ENCODE measurements at regions of chrX and their contacts with region 1.

Region 1: GRCh38 chrX:75883446-75883845 is 98.4 kb upstream of the MAGEE2 start:
- DNase-seq: no peak
- H3K4me3 ChIP-seq: no peak overlapping the region
- H3K27ac ChIP-seq: no peak overlapping the region
- H3K4me1 ChIP-seq: no peaks in the 10 kb centered on the region
- H3K27me3 ChIP-seq: no peaks in the 10 kb centered on the region
- CTCF ChIP-seq: no peak
- POLR2A ChIP-seq: no peak

Region 2: GRCh38 chrX:75522565-75523431 is 360.6 kb before region 1 on chrX and contains the start of gene ZDHHC15:
- CTCF ChIA-PET with region 1: no interaction called
- POLR2A ChIA-PET with region 1: no interaction called
- dilution Hi-C with region 1: no loop called
- intact Hi-C with region 1: loop called (anchors 10 kb)
- DNase-seq: peak; percentile 0
- H3K4me3 ChIP-seq: no peak within 1 kb of the TSS
- H3K27ac ChIP-seq: no peak within 1 kb of the TSS
- H3K4me1 ChIP-seq: no peaks in the 10 kb centered on the region
- H3K27me3 ChIP-seq: no peaks in the 10 kb centered on the region
- CTCF ChIP-seq: no peak
- POLR2A ChIP-seq: no peak
- total RNA-seq, gene ZDHHC15: not detected in 2 replicates